ENCODE measurements at regions of chr10 and their contacts with region 1.

Region 1: GRCh38 chr10:110864662-110865140 is 7.0 kb upstream of the PDCD4 start:
- DNase-seq: peak; percentile 63
- H3K4me3 Mint-ChIP-seq: peak overlapping the region; percentile 73
- H3K27ac Mint-ChIP-seq: peak overlapping the region; percentile 91
- H3K4me1 Mint-ChIP-seq: peaks cover 92% of the 10 kb centered on the region
- H3K27me3 Mint-ChIP-seq: no peaks in the 10 kb centered on the region

Region 2: GRCh38 chr10:110664483-110665420 is 199.9 kb before region 1 on chr10:
- CTCF ChIA-PET with region 1: no interaction called
- POLR2A ChIA-PET with region 1: no interaction called
- DNase-seq: no peak
- H3K4me3 Mint-ChIP-seq: no peak overlapping the region
- H3K27ac Mint-ChIP-seq: no peak overlapping the region
- H3K4me1 Mint-ChIP-seq: peaks cover 10% of the 10 kb centered on the region
- H3K27me3 Mint-ChIP-seq: peaks cover 21% of the 10 kb centered on the region

Region 3: DNA sequence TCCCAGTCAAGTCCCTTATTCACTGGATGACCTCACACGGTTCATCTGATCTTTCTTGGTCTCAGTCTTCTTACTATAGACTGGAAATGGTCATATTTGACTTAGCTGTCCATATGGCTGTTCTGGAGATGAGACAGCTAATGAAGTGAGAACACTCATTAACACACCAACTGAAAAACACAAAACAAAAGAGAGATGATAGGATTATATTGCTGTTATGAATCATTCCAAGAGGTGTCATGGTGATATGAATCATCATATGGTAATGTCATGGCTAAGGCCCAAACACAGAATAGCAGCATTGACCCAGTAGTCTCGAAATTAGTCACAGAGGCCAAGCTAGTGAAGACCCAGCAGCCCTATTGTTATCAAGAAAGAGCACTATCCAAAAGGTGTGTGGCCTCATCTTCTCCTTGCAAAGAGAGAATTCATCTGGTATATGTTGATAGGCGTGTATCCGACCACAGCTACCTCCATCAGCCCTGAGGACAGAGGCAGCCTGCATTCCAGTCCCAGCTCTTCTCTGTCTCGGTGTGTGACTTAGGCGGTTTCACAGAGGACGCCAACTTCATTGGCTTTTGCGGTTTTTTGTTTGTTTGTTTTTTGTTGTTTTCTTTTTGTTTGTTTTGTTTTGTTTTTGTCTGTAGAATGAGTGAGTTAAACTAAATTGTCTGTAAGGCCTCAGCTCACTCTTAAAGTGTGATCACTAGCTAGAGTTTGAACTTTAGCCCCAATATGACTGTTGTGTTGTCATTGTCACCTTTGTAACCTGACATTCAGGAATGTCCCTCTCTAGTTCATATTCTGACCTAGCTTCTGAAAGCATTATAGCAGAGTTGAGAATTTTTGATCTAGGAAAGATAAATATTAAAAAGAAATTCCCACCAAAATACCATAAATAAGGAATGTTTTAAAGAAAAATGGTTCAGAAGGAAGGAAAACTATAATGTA is 90.4 kb before region 1 on chr10:
- CTCF ChIA-PET with region 1: interaction called, 3 read pairs
- POLR2A ChIA-PET with region 1: interaction called, 10 read pairs
- DNase-seq: peak; percentile 64
- H3K4me3 Mint-ChIP-seq: no peak overlapping the region
- H3K27ac Mint-ChIP-seq: peak overlapping the region; percentile 89
- H3K4me1 Mint-ChIP-seq: peaks cover 23% of the 10 kb centered on the region
- H3K27me3 Mint-ChIP-seq: peaks cover 2% of the 10 kb centered on the region

Region 4: GRCh38 chr10:110852255-110852896 is 12.3 kb before region 1 on chr10:
- CTCF ChIA-PET with region 1: interaction called, 15 read pairs
- POLR2A ChIA-PET with region 1: interaction called, 98 read pairs
- DNase-seq: peak; percentile 51
- H3K4me3 Mint-ChIP-seq: peak overlapping the region; percentile 48
- H3K27ac Mint-ChIP-seq: peak overlapping the region; percentile 57
- H3K4me1 Mint-ChIP-seq: peaks cover 61% of the 10 kb centered on the region
- H3K27me3 Mint-ChIP-seq: no peaks in the 10 kb centered on the region

Region 5: DNA sequence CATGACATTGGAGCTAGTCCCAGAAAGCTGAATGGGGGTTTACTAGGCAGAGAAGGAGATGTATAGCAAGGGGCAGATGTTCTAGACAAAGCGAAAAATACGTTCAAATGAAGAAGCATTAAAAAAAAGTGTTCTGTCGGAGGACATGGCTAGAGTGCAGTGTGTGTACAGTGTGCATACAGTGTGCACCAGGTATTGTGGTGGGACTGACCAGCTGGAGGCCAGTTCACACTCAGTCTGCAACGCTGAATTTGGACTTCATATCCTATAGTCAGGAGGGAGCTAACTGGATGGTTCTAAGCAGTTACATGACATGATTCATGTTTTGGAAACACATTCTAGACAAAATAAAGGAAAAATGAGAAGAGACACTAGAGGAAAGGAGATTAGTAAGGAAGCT is 45.4 kb after region 1 on chr10:
- CTCF ChIA-PET with region 1: no interaction called
- POLR2A ChIA-PET with region 1: no interaction called
- DNase-seq: no peak
- H3K4me3 Mint-ChIP-seq: no peak overlapping the region
- H3K27ac Mint-ChIP-seq: no peak overlapping the region
- H3K4me1 Mint-ChIP-seq: no peaks in the 10 kb centered on the region
- H3K27me3 Mint-ChIP-seq: no peaks in the 10 kb centered on the region